Prostate gland (tissue), 2 donors: ENCODE measurements at regions of chr17 and their contacts with region 1.

Region 1: DNA sequence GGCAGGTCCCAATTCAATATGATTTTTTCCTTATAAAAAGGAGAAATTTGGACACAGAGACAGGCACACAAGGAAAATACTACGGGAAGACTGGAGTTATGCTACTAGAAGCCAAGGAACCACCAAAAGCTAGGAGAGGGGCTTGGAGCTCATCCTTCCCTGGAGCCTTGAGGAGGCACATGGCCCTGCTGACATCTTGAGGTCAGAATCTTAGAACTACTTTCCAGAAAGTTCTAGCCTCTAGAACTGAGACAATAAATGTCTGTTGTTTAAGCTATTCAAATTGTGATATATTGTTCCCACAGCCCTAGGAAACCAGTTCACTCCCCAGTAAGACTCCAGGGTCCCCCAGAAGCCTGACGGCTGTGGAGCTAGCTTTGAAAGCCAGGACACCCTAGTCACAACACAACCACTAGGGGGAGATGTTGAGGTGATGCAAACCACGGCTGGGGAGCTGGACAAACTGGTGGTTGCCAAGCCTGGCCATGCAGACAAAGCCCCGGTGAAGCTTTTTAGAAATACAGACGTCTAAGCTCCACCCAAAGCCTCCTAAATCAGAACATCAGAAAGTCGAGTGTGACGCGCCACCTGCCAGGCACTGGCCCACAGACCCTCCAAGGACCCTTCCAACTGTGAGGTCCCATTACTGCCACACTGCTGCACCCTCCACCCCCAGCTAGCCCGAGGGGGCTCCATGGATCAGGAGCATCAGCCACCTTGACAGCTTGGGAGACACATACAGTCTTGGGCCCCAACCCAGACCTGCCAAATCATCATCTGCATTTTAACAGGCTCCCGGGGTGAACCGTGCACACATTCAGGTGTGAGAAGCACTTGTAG is 106.4 kb downstream of the SLC39A11 start:
- DNase-seq: peak; percentile 64
- H3K4me3 ChIP-seq: no peak overlapping the region
- H3K27ac ChIP-seq: no peak overlapping the region
- H3K4me1 ChIP-seq: no peaks in the 10 kb centered on the region
- H3K27me3 ChIP-seq: no peaks in the 10 kb centered on the region
- CTCF ChIP-seq: peak; percentile 71 to 84 (median 77)
- POLR2A ChIP-seq: no peak

Region 2: DNA sequence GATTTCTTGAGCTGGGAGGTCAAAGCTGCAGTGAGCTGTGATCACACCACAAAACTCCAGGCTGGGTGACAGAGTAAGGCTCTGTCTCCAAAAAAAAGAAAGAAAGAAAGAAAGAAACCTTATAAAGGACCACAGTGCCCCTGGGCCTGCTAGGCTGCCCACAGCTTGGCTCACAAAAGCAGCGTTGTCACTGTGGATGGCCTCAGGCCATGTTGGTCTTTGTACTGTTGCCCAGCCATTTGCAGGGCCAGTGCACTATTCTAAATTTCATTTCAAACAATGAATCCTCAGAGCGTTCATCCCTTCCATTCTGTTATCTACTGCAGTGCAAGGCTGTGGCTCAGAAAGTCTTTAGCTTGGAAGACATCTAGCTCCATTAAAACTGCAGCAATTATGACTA is 102.0 kb before region 1 on chr17:
- intact Hi-C with region 1: no loop called
- DNase-seq: no peak
- H3K4me3 ChIP-seq: no peak overlapping the region
- H3K27ac ChIP-seq: no peak overlapping the region
- H3K4me1 ChIP-seq: no peaks in the 10 kb centered on the region
- H3K27me3 ChIP-seq: no peaks in the 10 kb centered on the region
- CTCF ChIP-seq: no peak
- POLR2A ChIP-seq: no peak

Region 3: DNA sequence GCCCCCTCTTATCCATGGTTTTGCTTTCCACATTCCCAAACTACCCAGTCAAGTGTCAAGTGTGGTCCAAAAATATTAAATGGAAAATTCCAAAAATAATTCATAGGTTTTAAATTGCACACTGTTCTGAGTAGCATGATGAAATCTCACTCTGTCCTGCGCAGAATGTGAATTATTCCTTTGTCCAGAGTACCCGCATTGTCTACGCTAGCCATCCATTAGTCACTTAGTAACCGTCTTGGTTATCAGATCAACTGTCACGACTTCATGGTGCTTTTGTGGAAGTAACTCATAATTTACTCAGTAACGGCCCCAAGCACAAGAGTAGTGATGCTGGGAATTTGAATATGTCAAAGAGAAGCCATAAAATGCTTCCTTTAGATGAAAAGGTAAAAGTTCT is 11.5 kb after region 1 on chr17:
- intact Hi-C with region 1: no loop called
- DNase-seq: no peak
- H3K4me3 ChIP-seq: no peak overlapping the region
- H3K27ac ChIP-seq: no peak overlapping the region
- H3K4me1 ChIP-seq: no peaks in the 10 kb centered on the region
- H3K27me3 ChIP-seq: no peaks in the 10 kb centered on the region
- CTCF ChIP-seq: no peak
- POLR2A ChIP-seq: no peak

Region 4: DNA sequence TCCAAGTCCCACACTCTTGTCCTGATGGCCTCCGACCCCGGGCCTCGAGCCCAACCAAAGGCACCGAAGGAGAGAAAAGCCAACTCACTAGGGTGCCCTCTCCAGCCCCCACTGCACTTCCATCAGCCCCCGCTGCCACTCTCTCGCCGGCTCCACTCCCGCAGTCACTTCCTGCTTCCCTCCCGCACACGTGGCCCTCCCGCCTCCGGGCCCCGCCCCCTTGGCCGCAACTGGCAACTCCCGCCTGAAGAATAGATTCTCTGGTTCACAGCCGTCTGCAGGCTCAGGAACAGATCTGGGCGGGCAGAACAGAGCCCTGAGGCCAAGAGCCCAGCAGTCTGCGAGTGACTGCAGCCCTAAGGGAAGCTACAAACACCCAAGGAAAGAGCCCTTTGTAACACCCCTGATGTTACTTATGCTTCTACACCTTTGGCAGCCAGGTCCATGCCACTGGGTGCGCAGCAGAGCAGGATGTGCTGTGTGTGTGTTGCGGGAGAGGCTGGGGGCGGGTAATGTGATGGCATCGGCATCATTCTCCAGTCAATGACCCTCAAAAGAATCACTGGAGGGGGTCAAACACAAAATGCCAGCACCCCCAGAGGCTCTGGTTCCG is 106.5 kb after region 1 on chr17 and contains the start of gene SLC39A11:
- intact Hi-C with region 1: loop called (anchors 5 kb)
- DNase-seq: peak; percentile 87
- H3K4me3 ChIP-seq: peak within 1 kb of the TSS; percentile 43 to 47
- H3K27ac ChIP-seq: peak within 1 kb of the TSS; percentile 52 to 53
- H3K4me1 ChIP-seq: peaks cover 3% of the 10 kb centered on the region
- H3K27me3 ChIP-seq: no peaks in the 10 kb centered on the region
- CTCF ChIP-seq: no peak
- POLR2A ChIP-seq: no peak
- total RNA-seq, gene SLC39A11: 15.1 to 29.7 TPM

Region 5: GRCh38 chr17:73156166-73156840 is 170.2 kb after region 1 on chr17:
- intact Hi-C with region 1: loop called (anchors 5 kb)
- DNase-seq: peak; percentile 33
- H3K4me3 ChIP-seq: no peak overlapping the region
- H3K27ac ChIP-seq: no peak overlapping the region
- H3K4me1 ChIP-seq: no peaks in the 10 kb centered on the region
- H3K27me3 ChIP-seq: no peaks in the 10 kb centered on the region
- CTCF ChIP-seq: peak in 3 of 4 experiments; percentile 40 to 76 (median 73)
- POLR2A ChIP-seq: no peak

Region 6: GRCh38 chr17:73278465-73279453 is 292.7 kb after region 1 on chr17:
- intact Hi-C with region 1: no loop called
- DNase-seq: peak; percentile 87
- H3K4me3 ChIP-seq: no peak overlapping the region
- H3K27ac ChIP-seq: peak overlapping the region; percentile 83 to 93
- H3K4me1 ChIP-seq: peaks cover 15% of the 10 kb centered on the region
- H3K27me3 ChIP-seq: no peaks in the 10 kb centered on the region
- CTCF ChIP-seq: no peak
- POLR2A ChIP-seq: no peak